GM12878 (cell line): ENCODE measurements at regions of chr12 and their contacts with region 1.

Region 1: GRCh38 chr12:75289753-75290152 is 40.4 kb downstream of the CAPS2 start:
- DNase-seq: no peak
- ATAC-seq: no peak
- H3K4me3 ChIP-seq: no peak overlapping the region
- H3K27ac ChIP-seq: no peak overlapping the region
- H3K4me1 ChIP-seq: no peaks in the 10 kb centered on the region
- H3K27me3 ChIP-seq: no peaks in the 10 kb centered on the region
- CTCF ChIP-seq: no peak; a peak in 1 of 6 replicates
- EP300 ChIP-seq: no peak
- POLR2A ChIP-seq: no peak
- RAD21 ChIP-seq: peak; percentile 46; the same call in 1 of the 2 replicates

Region 2: DNA sequence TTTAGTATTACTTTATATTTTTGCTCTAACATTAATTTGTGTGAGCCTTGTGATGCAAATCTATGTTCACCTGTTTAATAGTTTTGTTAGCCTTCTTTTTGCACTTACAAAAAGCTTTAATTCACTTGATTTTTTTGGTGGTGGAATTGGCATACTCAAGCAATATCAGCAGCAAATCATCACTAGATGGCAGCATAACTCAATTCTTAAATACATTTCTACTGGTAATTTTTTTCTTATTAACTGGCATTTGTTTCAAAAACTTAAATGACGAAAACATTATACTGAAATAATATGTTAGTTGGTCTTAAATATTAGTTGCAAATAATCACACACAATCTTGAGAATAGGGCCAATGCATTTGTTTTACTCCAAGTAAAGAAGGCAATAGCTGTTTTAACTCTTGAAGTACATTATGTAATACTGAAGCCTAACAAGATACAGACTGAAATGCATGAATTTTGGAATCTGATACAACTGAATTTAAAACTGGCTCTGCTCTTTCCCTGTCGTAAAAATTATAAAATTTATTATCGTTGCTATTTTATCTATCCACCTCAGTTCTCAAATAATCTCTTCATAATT is 600.6 kb before region 1 on chr12:
- CTCF ChIA-PET with region 1: interaction called, 5 read pairs
- POLR2A ChIA-PET with region 1: no interaction called
- RAD21 ChIA-PET with region 1: interaction called, 5 read pairs
- SMC1A ChIA-PET with region 1: interaction called, 4 read pairs
- in situ Hi-C with region 1: no loop called
- intact Hi-C with region 1: loop called (anchors 1 kb)
- DNase-seq: no peak
- ATAC-seq: peak; percentile 65; the same call in 2 of the 3 replicates
- H3K4me3 ChIP-seq: no peak overlapping the region
- H3K27ac ChIP-seq: no peak overlapping the region
- H3K4me1 ChIP-seq: no peaks in the 10 kb centered on the region
- H3K27me3 ChIP-seq: no peaks in the 10 kb centered on the region
- CTCF ChIP-seq: peak in 2 of 3 experiments; percentile 52 to 55; a peak in 3 of 6 replicates
- EP300 ChIP-seq: no peak
- POLR2A ChIP-seq: no peak
- RAD21 ChIP-seq: peak; percentile 52

Region 3: DNA sequence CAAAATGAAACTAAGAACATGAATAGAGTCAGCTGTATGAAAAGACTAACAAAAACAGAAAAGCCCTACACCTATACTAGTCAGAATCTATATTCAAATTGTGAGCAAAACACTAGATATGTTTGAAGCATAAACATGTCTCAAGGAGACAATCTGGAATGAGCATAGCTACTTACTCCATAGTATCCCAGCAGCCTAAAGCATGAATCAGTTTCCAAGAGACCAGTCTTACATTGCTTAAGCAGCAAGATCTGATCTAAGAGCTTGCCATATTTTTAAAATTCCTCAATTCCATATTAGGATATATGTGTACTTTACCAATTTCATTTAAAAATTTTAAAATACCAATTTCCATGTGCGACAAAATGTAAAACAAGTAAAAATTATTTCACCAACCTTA is 32.7 kb after region 1 on chr12:
- CTCF ChIA-PET with region 1: no interaction called
- POLR2A ChIA-PET with region 1: no interaction called
- RAD21 ChIA-PET with region 1: no interaction called
- SMC1A ChIA-PET with region 1: no interaction called
- in situ Hi-C with region 1: no loop called
- intact Hi-C with region 1: no loop called
- DNase-seq: no peak
- ATAC-seq: no peak
- H3K4me3 ChIP-seq: no peak overlapping the region
- H3K27ac ChIP-seq: no peak overlapping the region
- H3K4me1 ChIP-seq: no peaks in the 10 kb centered on the region
- H3K27me3 ChIP-seq: no peaks in the 10 kb centered on the region
- CTCF ChIP-seq: no peak
- EP300 ChIP-seq: no peak
- POLR2A ChIP-seq: no peak
- RAD21 ChIP-seq: no peak